CD4-positive, alpha-beta T cell (primary cell): ENCODE measurements at regions of chr7 and their contacts with region 1.

Region 1: GRCh38 chr7:30284298-30285066 is at the start of gene ZNRF2:
- DNase-seq: peak; percentile 97 to 100 (median 99)
- ATAC-seq: peak; percentile 85
- H3K4me3 ChIP-seq: peak within 1 kb of the TSS; percentile 85
- H3K4me3 Mint-ChIP-seq: peak within 1 kb of the TSS; percentile 94
- H3K27ac ChIP-seq: peak within 1 kb of the TSS; percentile 66 to 78
- H3K27ac Mint-ChIP-seq: peak within 1 kb of the TSS; percentile 94
- H3K4me1 ChIP-seq: peaks cover 7% of the 10 kb centered on the region
- H3K4me1 Mint-ChIP-seq: peaks cover 40% of the 10 kb centered on the region
- H3K27me3 ChIP-seq: no peaks in the 10 kb centered on the region
- H3K27me3 Mint-ChIP-seq: no peaks in the 10 kb centered on the region
- CTCF ChIP-seq: peak; percentile 44
- total RNA-seq, gene ZNRF2: 20.4 to 23.6 TPM

Region 2: GRCh38 chr7:30047124-30047523 is 237.4 kb before region 1 on chr7:
- CTCF ChIA-PET with region 1: no interaction called
- POLR2A ChIA-PET with region 1: no interaction called
- intact Hi-C with region 1: no loop called
- DNase-seq: no peak
- ATAC-seq: no peak
- H3K4me3 ChIP-seq: no peak overlapping the region
- H3K4me3 Mint-ChIP-seq: no peak overlapping the region
- H3K27ac ChIP-seq: no peak overlapping the region
- H3K27ac Mint-ChIP-seq: no peak overlapping the region
- H3K4me1 ChIP-seq: no peaks in the 10 kb centered on the region
- H3K4me1 Mint-ChIP-seq: peaks cover 7% of the 10 kb centered on the region
- H3K27me3 ChIP-seq: no peaks in the 10 kb centered on the region
- H3K27me3 Mint-ChIP-seq: no peaks in the 10 kb centered on the region
- CTCF ChIP-seq: no peak

Region 3: DNA sequence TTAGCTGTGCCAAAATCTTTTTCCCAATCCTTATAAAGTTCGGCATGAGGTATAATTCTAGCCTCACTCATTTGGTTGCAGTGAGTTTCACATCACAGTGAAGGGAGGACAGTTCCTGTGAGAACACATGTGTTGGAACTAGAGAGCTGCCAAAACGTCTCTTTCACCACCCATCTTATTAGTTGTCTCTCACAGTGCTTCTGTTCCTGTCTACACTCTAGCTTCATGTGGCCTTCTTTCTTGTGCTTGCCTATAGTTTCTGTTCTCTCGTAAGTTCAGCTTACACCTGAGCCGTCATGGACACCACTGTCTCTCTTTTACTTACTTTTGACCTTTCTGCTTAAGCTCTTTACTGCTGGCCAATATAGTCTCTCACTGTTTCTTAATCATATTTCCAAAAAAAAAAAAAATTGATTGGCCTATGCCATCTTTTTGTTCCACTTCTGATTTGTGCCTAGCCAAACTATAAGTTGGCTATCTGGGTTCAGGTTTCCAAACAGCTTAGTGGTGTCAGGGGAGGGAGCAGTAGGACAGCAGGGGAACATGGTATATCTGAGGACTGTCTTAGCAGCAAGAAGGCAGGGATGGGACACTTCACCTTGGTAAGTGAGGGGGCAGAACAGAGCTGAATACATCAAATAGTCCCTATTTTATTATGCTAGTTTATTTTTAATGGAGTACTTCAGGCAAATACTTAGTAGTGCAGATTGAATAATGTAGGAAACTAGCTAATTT is 38.0 kb after region 1 on chr7:
- CTCF ChIA-PET with region 1: interaction called, 8 read pairs
- POLR2A ChIA-PET with region 1: interaction called, 32 read pairs
- intact Hi-C with region 1: loop called (anchors 5 kb)
- DNase-seq: peak in 5 of 14 experiments; percentile 7 to 71 (median 59)
- ATAC-seq: peak; percentile 78
- H3K4me3 ChIP-seq: peak overlapping the region; percentile 36
- H3K4me3 Mint-ChIP-seq: peak overlapping the region; percentile 88
- H3K27ac ChIP-seq: peak overlapping the region; percentile 70 to 79
- H3K27ac Mint-ChIP-seq: peak overlapping the region; percentile 90
- H3K4me1 ChIP-seq: peaks cover 10% of the 10 kb centered on the region
- H3K4me1 Mint-ChIP-seq: peaks cover 83% of the 10 kb centered on the region
- H3K27me3 ChIP-seq: no peaks in the 10 kb centered on the region
- H3K27me3 Mint-ChIP-seq: no peaks in the 10 kb centered on the region
- CTCF ChIP-seq: no peak

Region 4: GRCh38 chr7:30478349-30479201 is 194.1 kb after region 1 on chr7 and contains the start of gene NOD1:
- CTCF ChIA-PET with region 1: no interaction called
- POLR2A ChIA-PET with region 1: interaction called, 7 read pairs
- intact Hi-C with region 1: loop called in 1 of 2 experiments (anchors 10 kb)
- DNase-seq: peak; percentile 38 to 80 (median 58)
- ATAC-seq: peak; percentile 87
- H3K4me3 ChIP-seq: peak within 1 kb of the TSS; percentile 76
- H3K4me3 Mint-ChIP-seq: no peak within 1 kb of the TSS
- H3K27ac ChIP-seq: peak within 1 kb of the TSS; percentile 60 to 65
- H3K27ac Mint-ChIP-seq: no peak within 1 kb of the TSS
- H3K4me1 ChIP-seq: peaks cover 31% of the 10 kb centered on the region
- H3K4me1 Mint-ChIP-seq: peaks cover 49% of the 10 kb centered on the region
- H3K27me3 ChIP-seq: no peaks in the 10 kb centered on the region
- H3K27me3 Mint-ChIP-seq: no peaks in the 10 kb centered on the region
- CTCF ChIP-seq: no peak
- total RNA-seq, gene NOD1: 11.6 to 12.6 TPM

Region 5: GRCh38 chr7:30504347-30505173 is 220.1 kb after region 1 on chr7 and contains the start of gene GGCT:
- CTCF ChIA-PET with region 1: no interaction called
- POLR2A ChIA-PET with region 1: no interaction called
- intact Hi-C with region 1: loop called (anchors 2 kb)
- DNase-seq: peak; percentile 93 to 98 (median 95)
- ATAC-seq: peak; percentile 98
- H3K4me3 ChIP-seq: peak within 1 kb of the TSS; percentile 88
- H3K4me3 Mint-ChIP-seq: peak within 1 kb of the TSS; percentile 94
- H3K27ac ChIP-seq: peak within 1 kb of the TSS; percentile 42 to 57
- H3K27ac Mint-ChIP-seq: peak within 1 kb of the TSS; percentile 74
- H3K4me1 ChIP-seq: peaks cover 19% of the 10 kb centered on the region
- H3K4me1 Mint-ChIP-seq: peaks cover 29% of the 10 kb centered on the region
- H3K27me3 ChIP-seq: no peaks in the 10 kb centered on the region
- H3K27me3 Mint-ChIP-seq: no peaks in the 10 kb centered on the region
- CTCF ChIP-seq: no peak
- total RNA-seq, gene GGCT: 6.3 to 6.6 TPM

Region 6: GRCh38 chr7:30594549-30595435 is 310.3 kb after region 1 on chr7 and contains the start of gene GARS1:
- CTCF ChIA-PET with region 1: no interaction called
- POLR2A ChIA-PET with region 1: interaction called, 5 read pairs
- intact Hi-C with region 1: loop called in 1 of 2 experiments (anchors 2 kb)
- DNase-seq: peak; percentile 80 to 95 (median 87)
- ATAC-seq: peak; percentile 82
- H3K4me3 ChIP-seq: peak within 1 kb of the TSS; percentile 85
- H3K4me3 Mint-ChIP-seq: peak within 1 kb of the TSS; percentile 99
- H3K27ac ChIP-seq: peak within 1 kb of the TSS; percentile 88 to 90
- H3K27ac Mint-ChIP-seq: peak within 1 kb of the TSS; percentile 100
- H3K4me1 ChIP-seq: peaks cover 28% of the 10 kb centered on the region
- H3K4me1 Mint-ChIP-seq: peaks cover 85% of the 10 kb centered on the region
- H3K27me3 ChIP-seq: no peaks in the 10 kb centered on the region
- H3K27me3 Mint-ChIP-seq: no peaks in the 10 kb centered on the region
- CTCF ChIP-seq: no peak
- total RNA-seq, gene GARS1: 127 to 132 TPM

Region 7: GRCh38 chr7:31000161-31000693 is 715.7 kb after region 1 on chr7:
- CTCF ChIA-PET with region 1: no interaction called
- POLR2A ChIA-PET with region 1: no interaction called
- intact Hi-C with region 1: no loop called
- DNase-seq: no peak
- ATAC-seq: no peak
- H3K4me3 ChIP-seq: no peak overlapping the region
- H3K4me3 Mint-ChIP-seq: no peak overlapping the region
- H3K27ac ChIP-seq: no peak overlapping the region
- H3K27ac Mint-ChIP-seq: no peak overlapping the region
- H3K4me1 ChIP-seq: no peaks in the 10 kb centered on the region
- H3K4me1 Mint-ChIP-seq: no peaks in the 10 kb centered on the region
- H3K27me3 ChIP-seq: no peaks in the 10 kb centered on the region
- H3K27me3 Mint-ChIP-seq: no peaks in the 10 kb centered on the region
- CTCF ChIP-seq: no peak